Activated naive CD4-positive, alpha-beta T cell treated with anti-CD3 and anti-CD28 coated beads for 36 hours (primary cell): ENCODE measurements at regions of chr6 and their contacts with region 1.

Region 1: GRCh38 chr6:160455541-160456213 is 107.5 kb downstream of the SLC22A3 start:
- DNase-seq: peak; percentile 74
- H3K4me3 Mint-ChIP-seq: no peak overlapping the region
- H3K27ac Mint-ChIP-seq: no peak overlapping the region
- H3K4me1 Mint-ChIP-seq: peaks cover 23% of the 10 kb centered on the region
- H3K27me3 Mint-ChIP-seq: no peaks in the 10 kb centered on the region

Region 2: GRCh38 chr6:159862103-159862502 is 593.6 kb before region 1 on chr6:
- CTCF ChIA-PET with region 1: interaction called, 7 read pairs
- intact Hi-C with region 1: loop called (anchors 1 kb)
- DNase-seq: peak; percentile 7
- H3K4me3 Mint-ChIP-seq: no peak overlapping the region
- H3K27ac Mint-ChIP-seq: peak overlapping the region; percentile 14
- H3K4me1 Mint-ChIP-seq: peaks cover 16% of the 10 kb centered on the region
- H3K27me3 Mint-ChIP-seq: no peaks in the 10 kb centered on the region

Region 3: DNA sequence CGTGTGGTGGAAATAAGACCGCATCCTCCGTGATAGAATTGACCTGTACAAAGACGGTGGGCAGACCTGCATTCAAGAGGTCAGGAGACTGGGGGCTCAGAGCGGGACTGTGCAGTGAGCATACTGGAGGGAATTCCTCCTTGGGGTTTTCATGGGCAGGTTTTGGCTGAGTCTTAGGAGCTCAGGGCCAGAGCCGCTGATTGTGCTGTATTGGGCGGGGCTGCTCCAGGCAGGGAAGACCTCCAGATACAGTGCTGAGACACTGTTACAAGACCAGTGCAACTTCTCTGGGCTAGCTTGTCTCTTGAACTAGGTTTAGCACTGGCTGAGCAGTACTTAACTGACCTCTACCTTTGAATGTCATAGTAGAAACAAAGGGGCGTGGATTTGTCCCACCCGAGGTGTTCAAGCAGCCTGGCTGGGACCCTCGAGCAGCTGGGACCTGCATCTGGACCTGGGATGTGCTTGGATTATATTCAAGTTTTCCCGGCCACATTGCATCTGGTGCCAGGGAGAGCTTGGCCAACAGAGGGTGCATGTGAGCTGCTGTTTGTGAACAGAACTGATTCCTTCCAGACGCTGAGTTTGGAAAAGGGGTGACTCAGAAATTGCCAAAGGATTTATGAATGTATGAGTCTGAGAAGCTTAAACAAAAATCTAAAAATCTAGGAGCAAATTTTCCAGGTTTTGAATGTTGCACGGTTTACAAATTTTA is 367.5 kb before region 1 on chr6:
- CTCF ChIA-PET with region 1: interaction called, 4 read pairs
- intact Hi-C with region 1: loop called (anchors 1 kb)
- DNase-seq: no peak
- H3K4me3 Mint-ChIP-seq: no peak overlapping the region
- H3K27ac Mint-ChIP-seq: no peak overlapping the region
- H3K4me1 Mint-ChIP-seq: peaks cover 1% of the 10 kb centered on the region
- H3K27me3 Mint-ChIP-seq: no peaks in the 10 kb centered on the region

Region 4: GRCh38 chr6:160221423-160221822 is 234.3 kb before region 1 on chr6:
- CTCF ChIA-PET with region 1: interaction called, 18 read pairs
- intact Hi-C with region 1: loop called (anchors 1 kb)
- DNase-seq: no peak
- H3K4me3 Mint-ChIP-seq: no peak overlapping the region
- H3K27ac Mint-ChIP-seq: no peak overlapping the region
- H3K4me1 Mint-ChIP-seq: peaks cover 8% of the 10 kb centered on the region
- H3K27me3 Mint-ChIP-seq: peaks cover 19% of the 10 kb centered on the region

Region 5: DNA sequence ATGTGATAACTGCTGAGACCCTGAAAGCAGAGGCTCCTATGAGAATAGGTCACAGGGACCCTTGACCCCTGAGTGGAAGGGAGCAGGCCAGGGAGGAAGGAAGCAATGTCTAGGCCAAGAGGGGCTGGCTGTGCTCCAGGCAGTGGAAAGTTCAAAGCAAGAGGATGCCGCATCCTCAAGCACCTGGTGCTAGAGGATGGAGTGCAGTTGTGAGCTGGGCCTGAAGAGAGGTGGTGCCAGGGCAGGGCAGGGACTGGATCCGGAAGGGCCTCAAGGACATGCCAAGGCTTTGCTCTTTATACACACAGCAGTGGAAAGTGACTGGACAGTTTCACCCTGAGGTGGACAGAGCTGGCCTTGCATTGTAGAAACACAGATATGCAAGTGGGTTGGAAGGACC is 10.5 kb before region 1 on chr6:
- CTCF ChIA-PET with region 1: interaction called, 14 read pairs
- intact Hi-C with region 1: no loop called
- DNase-seq: no peak
- H3K4me3 Mint-ChIP-seq: no peak overlapping the region
- H3K27ac Mint-ChIP-seq: no peak overlapping the region
- H3K4me1 Mint-ChIP-seq: no peaks in the 10 kb centered on the region
- H3K27me3 Mint-ChIP-seq: peaks cover 13% of the 10 kb centered on the region

Region 6: GRCh38 chr6:160534050-160534696 is 78.5 kb after region 1 on chr6:
- CTCF ChIA-PET with region 1: interaction called, 10 read pairs
- intact Hi-C with region 1: loop called (anchors 1 kb)
- DNase-seq: peak; percentile 69
- H3K4me3 Mint-ChIP-seq: no peak overlapping the region
- H3K27ac Mint-ChIP-seq: no peak overlapping the region
- H3K4me1 Mint-ChIP-seq: no peaks in the 10 kb centered on the region
- H3K27me3 Mint-ChIP-seq: no peaks in the 10 kb centered on the region

Region 7: GRCh38 chr6:161010418-161010817 is 554.7 kb after region 1 on chr6:
- CTCF ChIA-PET with region 1: no interaction called
- intact Hi-C with region 1: no loop called
- DNase-seq: no peak
- H3K4me3 Mint-ChIP-seq: no peak overlapping the region
- H3K27ac Mint-ChIP-seq: no peak overlapping the region
- H3K4me1 Mint-ChIP-seq: peaks cover 39% of the 10 kb centered on the region
- H3K27me3 Mint-ChIP-seq: no peaks in the 10 kb centered on the region